Dorsolateral prefrontal cortex (tissue), 120 donors: ENCODE measurements at regions of chr20 and their contacts with region 1.

Region 1: DNA sequence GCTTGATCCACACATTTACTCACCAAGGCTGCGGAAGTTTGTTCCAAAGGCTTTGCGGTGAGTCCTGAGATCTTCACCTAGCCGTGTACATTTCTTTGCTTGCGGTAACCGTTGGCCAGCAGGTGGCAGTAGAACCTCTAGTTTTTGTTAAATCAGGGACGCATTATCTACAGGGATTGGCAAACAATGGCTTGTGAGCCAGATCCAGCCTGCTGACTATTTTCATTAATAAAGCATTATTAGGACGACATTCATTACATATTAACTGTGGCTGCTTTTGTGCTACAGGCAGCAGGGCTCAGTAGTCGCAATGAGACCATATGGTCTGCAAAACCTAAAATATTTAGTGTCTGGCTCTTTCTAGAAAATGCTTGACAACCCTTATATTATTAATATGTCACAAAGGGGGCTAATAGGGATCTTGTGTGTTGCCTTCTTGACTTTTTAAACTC is 174.1 kb downstream of the DOK5 start:
- DNase-seq: peak; percentile 55 to 89 (median 78)
- H3K4me3 ChIP-seq: no peak overlapping the region
- H3K27ac ChIP-seq: peak overlapping the region in 1 of 59 donors; percentile 7
- H3K27me3 ChIP-seq: no peaks in the 10 kb centered on the region
- CTCF ChIP-seq: peak; percentile 66 to 92 (median 81)

Region 2: DNA sequence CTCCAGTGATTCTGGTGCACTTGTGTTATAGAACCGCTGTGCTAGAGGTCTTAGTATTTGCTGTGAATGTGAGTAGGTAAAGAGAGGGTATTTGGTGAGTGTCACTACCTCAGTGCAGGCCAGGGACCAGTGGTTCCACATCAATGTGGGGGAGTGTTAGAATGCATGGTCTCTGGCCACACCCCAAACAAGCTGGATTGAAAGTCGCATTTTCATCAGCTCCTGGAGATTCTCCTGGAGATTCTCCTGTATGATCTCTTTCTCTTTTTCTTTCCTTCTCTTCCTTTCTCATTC is 552.4 kb before region 1 on chr20:
- intact Hi-C with region 1: loop called (anchors 5 kb)
- DNase-seq: no peak
- H3K4me3 ChIP-seq: no peak overlapping the region
- H3K27ac ChIP-seq: no peak overlapping the region
- H3K27me3 ChIP-seq: peaks cover 0 to 33% (median 0%) of the 10 kb centered on the region in 45 donors
- CTCF ChIP-seq: no peak

Region 3: GRCh38 chr20:54207743-54208547 is 441.6 kb before region 1 on chr20 and contains the start of gene PFDN4:
- intact Hi-C with region 1: loop called (anchors 5 kb)
- DNase-seq: peak; percentile 70 to 87 (median 78)
- H3K4me3 ChIP-seq: peak within 1 kb of the TSS; percentile 56 to 99 (median 93)
- H3K27ac ChIP-seq: peak within 1 kb of the TSS; percentile 92 to 100 (median 99)
- H3K27me3 ChIP-seq: no peaks in the 10 kb centered on the region
- CTCF ChIP-seq: peak; percentile 46 to 94 (median 85)
- total RNA-seq, gene PFDN4: 12.0 to 56.7 (median 33.2) TPM

Region 4: DNA sequence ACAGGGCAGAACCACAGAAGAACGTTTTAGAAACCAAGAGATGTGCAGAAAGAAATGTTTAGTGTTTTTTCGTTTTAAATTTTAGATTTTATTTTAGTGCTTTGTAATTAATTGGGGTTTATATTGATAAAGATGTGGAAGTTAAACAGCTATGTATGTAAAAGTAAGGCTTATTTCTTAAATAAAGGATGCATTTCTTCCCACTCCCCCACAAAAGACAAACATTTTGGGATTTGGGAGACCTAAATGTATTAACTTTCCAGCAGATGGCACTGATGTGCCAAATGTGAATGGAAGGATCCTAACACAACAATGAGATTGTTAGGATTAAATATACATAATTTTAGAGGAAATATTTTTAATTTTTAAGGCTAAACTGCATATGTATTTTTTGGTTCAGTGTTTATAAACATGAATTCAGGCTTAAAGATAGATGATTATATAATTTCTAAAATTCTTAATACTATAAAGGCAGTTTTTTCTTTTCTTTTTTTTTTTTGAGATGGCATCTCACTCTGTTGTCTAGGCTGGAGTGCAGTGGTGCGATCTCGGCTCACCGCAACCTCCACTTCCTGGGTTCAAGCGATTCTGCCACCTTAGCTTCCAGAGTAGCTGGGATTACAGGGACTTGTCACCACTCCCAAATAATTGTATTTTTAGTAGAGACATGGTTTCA is 429.6 kb before region 1 on chr20:
- intact Hi-C with region 1: loop called (anchors 2 to 5 kb)
- DNase-seq: peak in 1 of 10 donors; percentile 11
- H3K4me3 ChIP-seq: no peak overlapping the region
- H3K27ac ChIP-seq: no peak overlapping the region
- H3K27me3 ChIP-seq: no peaks in the 10 kb centered on the region
- CTCF ChIP-seq: peak in 55 of 56 donors; percentile 42 to 82 (median 65)

Region 5: DNA sequence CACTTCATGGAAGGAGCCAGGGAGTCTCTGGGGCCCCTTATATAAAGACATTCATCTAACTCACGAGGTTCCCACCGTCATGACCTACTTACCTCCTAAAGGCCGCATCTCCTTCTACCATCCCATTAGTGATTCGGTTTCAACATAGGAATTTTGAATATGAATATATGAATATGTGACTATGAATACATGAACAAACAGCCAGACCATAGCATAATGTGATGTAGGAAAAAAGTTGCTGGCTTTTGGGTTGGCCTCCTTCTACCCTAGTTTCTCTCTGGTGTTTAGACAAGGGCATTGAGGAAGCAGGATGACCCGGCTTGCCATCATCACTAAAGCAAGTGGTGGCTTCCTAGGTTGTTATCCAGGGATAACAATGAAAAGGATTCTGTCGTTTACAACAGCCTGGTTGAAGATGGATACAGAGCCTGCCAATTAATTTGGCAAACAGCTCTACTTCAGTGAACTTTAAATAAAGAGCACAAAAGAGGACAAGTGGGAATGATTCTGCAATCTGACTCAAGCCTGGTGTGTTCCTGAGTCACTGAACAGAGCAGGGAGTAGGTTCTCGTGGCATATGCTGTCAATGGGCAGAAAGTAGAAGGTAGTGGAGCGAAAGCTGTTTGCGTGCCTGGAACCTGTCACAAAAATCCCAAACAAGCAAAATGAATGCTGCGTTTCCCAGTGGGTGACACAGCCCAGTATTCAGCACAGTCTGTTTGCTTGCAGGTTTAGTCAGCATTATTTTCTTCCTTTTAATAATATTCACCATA is 218.2 kb before region 1 on chr20:
- intact Hi-C with region 1: no loop called
- DNase-seq: peak in 2 of 10 donors; percentile 8 to 76
- H3K4me3 ChIP-seq: no peak overlapping the region
- H3K27ac ChIP-seq: no peak overlapping the region
- H3K27me3 ChIP-seq: peaks cover 0 to 22% (median 0%) of the 10 kb centered on the region in 45 donors
- CTCF ChIP-seq: no peak

Region 6: DNA sequence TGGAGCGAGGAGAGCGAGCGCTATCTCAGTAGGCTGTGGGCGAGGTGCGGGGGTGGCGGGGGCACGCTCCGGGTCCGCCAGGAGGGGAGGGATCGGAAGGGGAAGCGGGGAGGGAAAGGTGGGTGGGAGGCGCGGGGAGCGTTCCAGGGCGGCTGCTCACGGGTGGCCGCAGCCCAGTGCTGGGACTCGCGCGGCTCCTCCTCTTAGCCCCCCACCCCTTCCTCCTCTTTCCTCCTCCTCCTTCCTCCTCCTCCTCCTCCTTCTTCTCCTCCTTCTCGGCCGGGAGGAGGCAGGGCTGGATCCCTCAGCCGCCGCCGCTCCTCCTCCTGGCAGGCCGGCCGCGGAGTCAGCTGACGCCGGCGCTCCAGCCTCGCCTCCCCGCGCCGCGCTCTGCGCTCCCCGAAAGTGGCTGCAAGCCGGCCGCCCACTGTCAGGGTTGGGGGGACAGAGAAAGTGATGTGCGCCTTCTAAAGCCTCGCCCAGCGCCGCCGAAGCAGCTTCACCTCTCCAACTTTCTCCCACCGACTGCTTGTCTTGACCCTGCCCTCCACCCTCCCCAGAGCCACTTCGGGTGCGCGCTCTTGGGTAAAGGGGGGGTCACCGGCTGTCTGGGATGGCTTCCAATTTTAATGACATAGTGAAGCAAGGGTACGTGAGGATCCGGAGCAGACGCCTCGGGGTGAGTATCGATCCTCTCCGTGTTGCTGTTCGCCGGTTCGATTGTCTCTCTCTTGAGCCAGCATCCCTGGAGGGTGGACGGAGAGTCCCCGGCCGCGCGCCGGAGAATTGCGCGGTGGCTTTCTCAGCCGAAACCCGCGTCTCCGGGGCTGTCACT is 174.0 kb before region 1 on chr20 and contains the start of gene DOK5:
- intact Hi-C with region 1: loop called in 1 of 2 experiments (anchors 10 kb)
- DNase-seq: peak in 7 of 10 donors; percentile 39 to 76 (median 60)
- H3K4me3 ChIP-seq: peak within 1 kb of the TSS; percentile 27 to 80 (median 65)
- H3K27ac ChIP-seq: peak within 1 kb of the TSS in 42 of 59 donors; percentile 16 to 79 (median 64)
- H3K27me3 ChIP-seq: peaks cover 0 to 62% (median 6%) of the 10 kb centered on the region in 45 donors
- CTCF ChIP-seq: peak in 3 of 56 donors; percentile 4 to 11 (median 6)
- total RNA-seq, gene DOK5: 7.7 to 33.3 (median 15.9) TPM

Region 7: DNA sequence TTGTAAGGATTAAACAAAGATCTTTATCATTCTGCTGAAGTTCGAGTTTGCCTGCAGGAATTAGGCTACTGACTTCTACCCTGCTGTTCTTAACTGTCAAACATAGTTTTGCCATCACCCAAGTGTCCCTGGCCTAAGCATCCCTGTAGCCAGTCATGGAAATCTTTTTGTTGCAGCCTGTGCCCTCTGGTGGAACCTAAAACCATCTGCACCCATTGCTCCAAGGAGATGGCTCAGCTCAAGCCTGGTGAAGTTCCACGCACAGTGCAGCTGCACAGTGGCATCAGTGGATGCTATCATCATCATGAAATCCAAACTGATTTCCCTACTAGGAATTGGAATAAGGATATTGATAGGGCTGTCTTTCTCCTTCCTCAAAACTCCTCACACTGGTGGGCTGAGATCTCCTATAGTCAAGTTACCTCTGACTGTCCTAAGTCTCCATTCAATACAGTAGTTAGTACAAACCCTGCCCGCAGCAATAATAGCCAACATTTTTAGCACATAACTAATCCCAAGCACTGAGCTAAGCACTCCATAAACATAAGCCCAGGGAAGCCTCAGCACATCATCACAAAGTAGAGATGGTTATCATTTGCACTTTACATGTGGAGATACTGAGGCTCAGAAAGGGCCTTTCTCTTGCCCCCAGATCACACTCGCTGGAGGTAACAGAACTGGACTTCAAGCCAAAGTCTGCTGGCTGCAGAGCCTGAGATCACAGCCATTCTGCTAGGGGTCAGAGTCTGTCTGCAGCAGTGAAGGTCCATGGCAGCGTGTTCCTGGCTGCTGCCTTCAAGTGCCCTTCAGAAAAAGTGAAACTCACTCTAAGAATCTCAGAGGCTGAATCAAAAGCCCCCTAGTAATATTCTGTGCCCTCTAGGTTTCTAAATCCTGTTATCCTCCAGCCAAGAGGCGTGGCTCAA is 1521.8 kb after region 1 on chr20:
- intact Hi-C with region 1: loop called in 1 of 2 experiments (anchors 10 kb)
- DNase-seq: peak in 8 of 10 donors; percentile 34 to 59 (median 52)
- H3K4me3 ChIP-seq: no peak overlapping the region
- H3K27ac ChIP-seq: no peak overlapping the region
- H3K27me3 ChIP-seq: peaks cover 0 to 24% (median 0%) of the 10 kb centered on the region in 45 donors
- CTCF ChIP-seq: peak; percentile 37 to 80 (median 68)